ENCODE measurements at regions of chr12 and their contacts with region 1.

Region 1: DNA sequence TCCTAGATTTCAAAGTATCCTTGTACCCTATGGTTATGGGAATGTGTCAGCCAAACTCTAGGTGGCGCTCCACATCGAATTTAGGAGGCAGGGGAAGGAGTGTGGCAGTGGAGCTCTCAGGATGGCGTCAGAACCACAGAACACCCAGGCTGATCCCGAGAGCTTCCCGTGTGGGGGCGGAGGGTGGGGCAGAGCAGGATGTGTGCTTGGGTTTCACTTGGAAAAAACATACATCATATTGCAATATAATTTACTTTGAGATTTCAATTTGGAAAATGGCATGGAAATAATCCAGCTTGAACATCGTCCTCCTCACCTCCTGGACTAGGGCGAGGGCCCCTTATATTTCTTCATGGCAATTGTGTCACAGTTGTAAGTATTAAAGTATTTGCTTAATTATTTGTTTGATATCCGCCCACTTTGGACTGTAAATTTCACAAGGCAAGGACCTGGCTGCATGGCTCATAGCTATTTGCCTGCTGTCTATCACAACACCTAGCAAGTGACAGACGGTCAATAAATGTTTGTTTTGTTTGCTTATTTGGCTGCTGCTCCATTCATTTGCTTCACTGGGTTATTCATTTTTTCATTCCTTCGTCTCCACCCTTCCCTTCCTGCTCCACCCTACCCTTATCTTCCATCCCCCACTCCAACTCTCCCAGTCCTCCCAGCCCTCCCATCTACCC is 221.5 kb upstream of the HMGA2 start:
- DNase-seq: peak; percentile 87 to 89
- ATAC-seq: peak; percentile 95 to 99
- H3K4me3 ChIP-seq: peak overlapping the region; percentile 39
- H3K27ac ChIP-seq: peak overlapping the region; percentile 66 to 79
- H3K4me1 ChIP-seq: peaks cover 20% of the 10 kb centered on the region
- CTCF ChIP-seq: peak; percentile 90
- EP300 ChIP-seq: peak in 1 of 2 experiments; percentile 38; a peak in 1 of 5 replicates
- POLR2A ChIP-seq: no peak
- RAD21 ChIP-seq: peak; percentile 92 to 97

Region 2: DNA sequence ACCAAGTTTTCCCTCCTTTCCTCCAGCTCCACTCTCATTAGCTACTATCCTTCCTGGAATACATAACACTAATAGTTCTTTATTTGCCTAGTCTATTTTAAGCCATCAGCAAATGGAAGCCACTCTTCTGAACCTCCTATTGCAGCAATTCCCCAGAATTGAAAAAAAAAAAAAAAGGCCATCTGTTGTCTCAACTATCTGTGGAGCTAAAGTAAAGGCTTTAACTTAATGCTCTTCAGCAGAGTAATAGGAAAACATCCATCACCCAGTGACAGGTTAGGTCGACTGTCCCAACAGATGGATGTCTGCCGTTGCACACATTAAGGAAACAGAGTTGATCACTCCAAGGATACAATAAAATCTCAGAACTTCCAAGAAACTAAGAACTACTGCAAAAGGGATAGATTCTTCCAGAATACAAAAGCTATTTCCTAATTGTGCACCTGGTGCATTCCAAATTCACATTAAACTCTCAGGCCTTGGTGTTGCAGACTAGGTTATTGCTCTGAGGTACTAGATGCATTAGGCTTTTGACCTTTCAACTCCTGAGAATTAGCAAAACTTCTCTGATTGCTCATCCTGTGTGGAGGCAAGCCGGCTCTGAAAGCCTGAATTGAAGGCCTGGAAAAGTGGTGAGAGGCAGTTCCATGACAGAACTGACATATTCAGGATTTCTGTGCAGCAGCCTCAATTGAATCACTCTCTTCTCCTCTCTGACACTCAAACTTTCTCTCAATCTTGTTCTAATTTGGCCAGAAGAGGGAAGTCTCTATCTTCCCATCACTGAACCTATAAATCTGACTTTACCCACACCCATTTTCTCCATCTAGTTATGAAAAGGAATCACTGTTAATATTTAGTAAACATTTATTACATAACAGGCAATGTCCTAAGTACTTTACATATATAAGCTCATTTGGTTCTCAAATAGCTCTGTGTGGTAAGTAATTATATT is 16.8 kb before region 1 on chr12:
- CTCF ChIA-PET with region 1: interaction called, 27 read pairs
- POLR2A ChIA-PET with region 1: no interaction called
- DNase-seq: no peak
- ATAC-seq: no peak
- H3K4me3 ChIP-seq: no peak overlapping the region
- H3K27ac ChIP-seq: no peak overlapping the region
- H3K4me1 ChIP-seq: no peaks in the 10 kb centered on the region
- CTCF ChIP-seq: no peak
- EP300 ChIP-seq: no peak
- POLR2A ChIP-seq: no peak
- RAD21 ChIP-seq: no peak

Region 3: DNA sequence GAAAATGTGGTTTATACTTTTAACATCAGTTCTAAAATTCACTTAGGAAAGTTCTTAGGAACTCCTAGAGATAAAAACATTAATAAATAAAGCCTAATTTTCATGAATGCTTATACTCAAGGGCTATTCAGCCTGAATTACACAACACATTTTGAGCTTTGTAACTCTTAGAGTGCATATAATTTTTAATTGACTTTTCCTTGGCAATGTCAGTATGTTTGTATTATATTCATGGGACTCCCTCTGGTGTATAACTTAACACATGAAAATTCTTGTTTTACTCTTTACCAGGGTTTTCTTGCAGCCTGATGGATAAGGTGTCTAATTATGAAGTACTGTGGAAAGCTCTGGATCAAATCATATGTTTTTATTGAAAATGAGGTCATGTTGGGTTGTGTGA is 71.0 kb after region 1 on chr12:
- CTCF ChIA-PET with region 1: interaction called, 16 read pairs
- POLR2A ChIA-PET with region 1: no interaction called
- DNase-seq: no peak
- ATAC-seq: peak in 1 of 2 experiments; percentile 36; a peak in 2 of 6 replicates
- H3K4me3 ChIP-seq: no peak overlapping the region
- H3K27ac ChIP-seq: peak overlapping the region in 1 of 2 experiments; percentile 30; a peak in 1 of 6 replicates
- H3K4me1 ChIP-seq: peaks cover 9% of the 10 kb centered on the region; the same call in 2 of the 3 replicates
- CTCF ChIP-seq: peak; percentile 47
- EP300 ChIP-seq: no peak
- POLR2A ChIP-seq: no peak
- RAD21 ChIP-seq: peak; percentile 66 to 76

Region 4: DNA sequence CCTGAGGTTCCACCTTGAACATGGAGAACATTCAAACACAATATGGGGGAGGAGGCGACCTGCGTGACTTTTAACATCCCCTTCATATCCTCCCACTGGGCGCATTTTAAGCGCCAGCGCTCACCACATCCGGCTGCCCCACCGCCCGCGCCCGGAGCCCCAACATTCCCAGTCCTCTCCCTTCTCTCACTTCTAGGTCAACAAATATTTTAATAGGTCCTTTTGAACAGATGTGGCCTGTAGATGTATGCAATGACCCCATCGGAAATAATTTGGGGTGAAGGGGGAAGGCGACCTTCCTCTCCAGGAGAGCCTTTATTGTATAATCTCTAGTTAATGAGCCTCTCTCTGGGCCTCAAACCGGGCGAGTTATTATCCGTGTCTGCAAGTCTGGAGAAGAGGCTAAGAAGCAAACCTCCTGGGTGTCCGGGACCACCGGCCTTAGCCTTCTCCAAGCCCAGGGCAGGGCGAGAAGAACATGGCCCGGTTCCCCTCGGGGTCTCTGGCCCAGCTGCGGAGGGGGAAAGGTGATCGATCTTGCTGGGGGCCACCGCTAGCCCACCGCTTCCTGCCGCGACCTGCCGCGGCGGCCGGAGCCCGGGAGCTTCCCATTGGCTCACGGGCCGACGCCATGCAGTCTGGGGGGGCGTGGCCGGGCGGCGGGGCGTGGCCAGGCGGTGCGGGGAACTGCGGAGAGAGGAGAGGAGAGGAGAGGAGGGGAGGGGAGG is 138.3 kb after region 1 on chr12:
- CTCF ChIA-PET with region 1: interaction called, 4 read pairs
- POLR2A ChIA-PET with region 1: interaction called, 11 read pairs
- DNase-seq: peak; percentile 82 to 84
- ATAC-seq: peak; percentile 94 to 98
- H3K4me3 ChIP-seq: peak overlapping the region; percentile 90
- H3K27ac ChIP-seq: peak overlapping the region; percentile 71 to 88
- H3K4me1 ChIP-seq: peaks cover 7% of the 10 kb centered on the region; the same call in 1 of the 3 replicates
- CTCF ChIP-seq: no peak
- EP300 ChIP-seq: no peak
- POLR2A ChIP-seq: peak; percentile 68
- RAD21 ChIP-seq: no peak

Region 5: DNA sequence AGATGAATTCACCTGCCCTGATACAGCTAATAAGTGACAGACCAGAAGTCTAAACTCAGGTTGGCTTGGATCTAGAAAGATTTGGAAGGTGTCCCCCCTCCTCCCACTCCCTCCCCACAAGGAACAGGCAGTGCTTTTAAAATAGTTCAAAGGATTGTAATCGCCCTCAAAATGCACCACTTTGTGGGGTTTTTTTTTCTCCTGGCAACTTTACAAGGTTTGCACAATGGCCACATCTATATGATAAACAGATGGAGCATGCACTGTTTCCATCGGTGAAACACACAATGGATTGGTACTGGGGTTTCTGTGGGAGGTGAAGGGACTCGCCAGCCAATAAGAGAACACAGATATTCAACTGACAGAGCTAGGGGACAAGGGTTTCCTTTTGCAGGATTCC is 390.4 kb after region 1 on chr12:
- CTCF ChIA-PET with region 1: interaction called, 12 read pairs
- POLR2A ChIA-PET with region 1: no interaction called
- DNase-seq: no peak
- ATAC-seq: no peak
- H3K4me3 ChIP-seq: no peak overlapping the region
- H3K27ac ChIP-seq: no peak overlapping the region
- H3K4me1 ChIP-seq: no peaks in the 10 kb centered on the region
- CTCF ChIP-seq: no peak
- EP300 ChIP-seq: no peak
- POLR2A ChIP-seq: no peak
- RAD21 ChIP-seq: no peak

Measured in A549 (cell line).